ENCODE measurements at regions of chr12 and their contacts with region 1.

Region 1: DNA sequence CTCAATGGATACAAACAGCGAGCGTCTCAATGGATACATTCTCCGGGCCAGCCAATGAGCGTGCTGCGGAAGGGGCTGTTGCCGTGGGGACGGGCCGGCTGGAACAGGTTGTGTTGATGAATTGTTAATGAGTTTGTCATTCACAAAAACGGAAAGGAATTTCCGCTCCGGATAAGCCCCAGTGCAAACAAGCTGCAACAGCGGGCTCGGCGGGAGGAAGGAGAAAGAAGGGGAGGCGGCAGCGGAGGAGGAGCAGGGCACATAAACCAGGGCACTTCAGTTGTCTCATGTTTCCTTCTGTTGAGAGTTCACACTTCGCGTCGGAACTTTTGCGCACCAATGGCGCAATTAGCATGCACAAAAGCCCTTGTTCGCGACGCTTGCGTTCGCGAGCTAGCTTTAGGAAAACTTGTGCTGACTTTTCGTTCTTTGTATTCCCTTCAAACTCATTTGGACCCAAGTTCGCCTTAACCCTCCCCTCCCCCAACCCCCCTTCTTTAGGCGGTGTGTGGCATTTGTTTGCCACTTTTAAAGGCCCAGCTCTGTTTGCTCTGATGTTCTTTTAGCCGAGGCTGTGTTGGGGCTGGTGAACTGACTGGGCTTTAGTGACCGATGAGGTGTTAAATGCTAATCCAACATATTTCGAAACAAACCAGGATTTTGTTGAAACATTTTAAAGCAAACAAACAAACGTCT is at the start of gene DUSP6:
- DNase-seq: peak; percentile 93 to 99
- H3K4me3 ChIP-seq: peak within 1 kb of the TSS; percentile 77
- H3K27ac ChIP-seq: peak within 1 kb of the TSS; percentile 93
- H3K4me1 ChIP-seq: peaks cover 40% of the 10 kb centered on the region
- H3K27me3 ChIP-seq: no peaks in the 10 kb centered on the region
- CTCF ChIP-seq: no peak
- total RNA-seq, gene DUSP6: 14.1 and 18.3 TPM in 2 replicates

Region 2: DNA sequence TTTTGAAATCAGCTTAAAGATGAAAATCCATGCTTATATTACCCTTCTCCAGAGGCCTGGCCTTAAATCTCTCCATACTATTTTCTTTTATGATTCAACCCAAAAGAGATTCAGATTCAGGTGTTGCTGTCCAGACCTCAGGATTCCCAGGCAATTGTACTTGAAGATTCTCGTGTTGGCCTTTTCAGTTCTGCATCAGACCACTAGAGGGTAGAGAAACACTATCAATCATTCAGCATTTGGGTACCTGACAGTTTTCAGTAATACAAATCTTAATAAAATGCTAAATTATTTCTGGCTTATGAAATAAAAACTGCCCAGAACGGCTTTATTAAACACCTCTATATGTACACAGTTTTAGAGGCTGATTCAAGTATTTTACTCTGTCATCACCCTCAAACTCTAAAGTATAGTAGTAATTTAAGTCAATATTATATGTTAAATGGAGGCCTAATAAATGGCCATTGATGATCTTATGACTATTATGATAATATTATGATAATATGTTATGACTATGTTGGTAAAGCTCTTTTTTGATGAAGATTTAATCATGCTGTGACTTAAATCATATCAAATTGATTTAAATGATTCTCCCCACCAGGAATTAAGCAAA is 301.5 kb before region 1 on chr12:
- CTCF ChIA-PET with region 1: no interaction called
- POLR2A ChIA-PET with region 1: no interaction called
- intact Hi-C with region 1: loop called (anchors 1 kb)
- DNase-seq: peak; percentile 18 to 53
- H3K4me3 ChIP-seq: no peak overlapping the region
- H3K27ac ChIP-seq: no peak overlapping the region
- H3K4me1 ChIP-seq: no peaks in the 10 kb centered on the region
- H3K27me3 ChIP-seq: no peaks in the 10 kb centered on the region
- CTCF ChIP-seq: peak; percentile 97

Region 3: DNA sequence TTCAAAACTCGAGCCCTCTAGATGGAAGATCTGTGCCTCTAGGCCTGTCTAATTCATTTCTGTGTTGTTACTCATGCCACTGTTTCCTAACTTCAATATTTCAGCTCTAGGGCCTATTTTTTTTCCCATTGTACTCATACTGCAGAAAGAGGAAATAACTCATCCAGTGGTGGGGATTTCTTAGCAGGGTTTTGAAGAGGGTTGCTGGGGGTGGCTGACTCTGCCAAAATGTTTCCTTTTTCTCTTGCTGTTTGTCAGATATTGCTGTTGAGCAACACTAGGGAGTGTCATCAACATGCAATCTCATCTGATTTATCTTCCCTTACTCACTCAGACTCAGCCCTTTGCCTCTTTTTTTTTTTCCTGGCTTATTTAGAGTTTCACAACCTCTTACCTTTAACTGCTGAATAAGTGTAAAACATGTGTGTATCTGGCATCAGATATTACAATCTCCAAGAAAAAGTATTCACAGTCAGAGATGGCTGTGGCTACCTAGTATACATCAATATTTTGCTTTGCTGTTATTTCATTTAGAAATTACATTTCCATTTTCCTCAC is 189.9 kb before region 1 on chr12:
- CTCF ChIA-PET with region 1: no interaction called
- POLR2A ChIA-PET with region 1: interaction called, 7 read pairs
- intact Hi-C with region 1: loop called (anchors 1 kb)
- DNase-seq: peak; percentile 58 to 97
- H3K4me3 ChIP-seq: no peak overlapping the region
- H3K27ac ChIP-seq: peak overlapping the region; percentile 92
- H3K4me1 ChIP-seq: peaks cover 71% of the 10 kb centered on the region
- H3K27me3 ChIP-seq: no peaks in the 10 kb centered on the region
- CTCF ChIP-seq: no peak

Region 4: DNA sequence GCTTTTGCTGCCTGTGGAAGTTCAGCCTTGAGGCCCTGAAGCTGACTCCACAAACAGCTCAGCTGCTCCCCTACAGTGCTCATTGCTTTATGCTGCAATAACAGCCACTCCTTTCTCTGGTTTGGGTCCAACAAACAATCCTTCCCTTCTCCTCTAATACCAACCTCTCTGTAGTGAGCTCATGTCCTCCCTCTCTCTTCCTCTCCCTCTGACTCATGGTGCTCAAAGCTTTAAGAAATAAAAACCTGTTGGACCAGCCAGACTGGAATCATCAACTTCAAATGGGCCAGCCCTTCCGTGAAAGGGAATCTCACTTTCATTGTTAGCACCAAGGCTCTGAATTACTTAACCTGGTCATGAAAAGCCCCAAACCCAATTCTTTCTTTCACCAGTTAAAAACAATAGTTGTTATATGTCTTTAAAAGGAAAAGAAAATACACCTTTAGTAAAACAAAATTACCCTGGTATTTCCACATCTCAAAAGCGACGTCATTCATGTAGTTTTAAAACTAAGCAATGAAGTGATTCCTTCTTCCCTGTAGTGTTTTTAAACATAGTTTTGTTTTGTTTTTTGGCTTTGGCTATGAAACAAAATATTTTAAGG is 126.7 kb before region 1 on chr12:
- CTCF ChIA-PET with region 1: no interaction called
- POLR2A ChIA-PET with region 1: interaction called, 7 read pairs
- intact Hi-C with region 1: loop called (anchors 1 kb)
- DNase-seq: peak; percentile 69 to 98
- H3K4me3 ChIP-seq: peak overlapping the region; percentile 30; the same call in 1 of the 2 replicates
- H3K27ac ChIP-seq: peak overlapping the region; percentile 93
- H3K4me1 ChIP-seq: peaks cover 55% of the 10 kb centered on the region
- H3K27me3 ChIP-seq: no peaks in the 10 kb centered on the region
- CTCF ChIP-seq: no peak

Region 5: DNA sequence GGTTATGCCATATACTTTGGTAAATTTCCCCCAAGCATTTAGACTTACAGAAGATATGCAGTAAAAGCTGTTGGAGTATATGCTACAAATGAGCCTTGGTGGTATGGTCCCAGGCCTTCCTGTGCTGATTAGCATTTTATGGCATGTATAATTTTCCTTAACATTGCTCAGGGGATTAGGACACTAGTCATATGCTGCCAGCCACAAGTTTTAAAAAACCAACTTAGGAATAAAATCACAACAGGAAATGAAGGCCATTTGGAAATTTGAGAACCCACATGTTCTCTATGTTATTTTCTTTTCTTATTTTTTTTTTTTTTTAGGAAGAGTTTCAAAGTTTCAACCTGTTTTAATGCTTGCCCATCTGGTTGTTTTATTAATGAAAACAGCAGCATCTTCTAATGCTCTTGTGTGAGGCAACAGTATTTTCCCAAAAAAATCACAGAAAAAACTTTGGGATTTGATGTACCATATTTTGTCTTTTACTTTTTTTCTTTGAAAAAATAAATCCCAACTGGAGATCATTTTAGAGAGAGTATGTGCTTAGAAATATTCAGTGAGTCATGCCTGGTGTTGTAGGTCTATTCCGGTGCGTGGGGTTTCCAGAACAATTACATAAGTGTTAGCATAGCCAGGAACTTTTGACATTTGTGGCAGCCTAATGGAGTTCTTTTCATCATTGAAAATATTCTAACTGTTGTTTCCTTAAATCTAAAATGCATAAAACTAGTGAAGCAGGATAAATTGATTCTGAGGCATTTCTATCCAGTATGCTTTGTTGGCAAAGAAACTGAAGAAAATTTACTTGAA is 21.3 kb after region 1 on chr12:
- CTCF ChIA-PET with region 1: no interaction called
- POLR2A ChIA-PET with region 1: interaction called, 22 read pairs
- intact Hi-C with region 1: loop called (anchors 1 kb)
- DNase-seq: peak in 1 of 2 experiments; percentile 32
- H3K4me3 ChIP-seq: no peak overlapping the region
- H3K27ac ChIP-seq: no peak overlapping the region
- H3K4me1 ChIP-seq: peaks cover 25% of the 10 kb centered on the region
- H3K27me3 ChIP-seq: no peaks in the 10 kb centered on the region
- CTCF ChIP-seq: no peak

Region 6: DNA sequence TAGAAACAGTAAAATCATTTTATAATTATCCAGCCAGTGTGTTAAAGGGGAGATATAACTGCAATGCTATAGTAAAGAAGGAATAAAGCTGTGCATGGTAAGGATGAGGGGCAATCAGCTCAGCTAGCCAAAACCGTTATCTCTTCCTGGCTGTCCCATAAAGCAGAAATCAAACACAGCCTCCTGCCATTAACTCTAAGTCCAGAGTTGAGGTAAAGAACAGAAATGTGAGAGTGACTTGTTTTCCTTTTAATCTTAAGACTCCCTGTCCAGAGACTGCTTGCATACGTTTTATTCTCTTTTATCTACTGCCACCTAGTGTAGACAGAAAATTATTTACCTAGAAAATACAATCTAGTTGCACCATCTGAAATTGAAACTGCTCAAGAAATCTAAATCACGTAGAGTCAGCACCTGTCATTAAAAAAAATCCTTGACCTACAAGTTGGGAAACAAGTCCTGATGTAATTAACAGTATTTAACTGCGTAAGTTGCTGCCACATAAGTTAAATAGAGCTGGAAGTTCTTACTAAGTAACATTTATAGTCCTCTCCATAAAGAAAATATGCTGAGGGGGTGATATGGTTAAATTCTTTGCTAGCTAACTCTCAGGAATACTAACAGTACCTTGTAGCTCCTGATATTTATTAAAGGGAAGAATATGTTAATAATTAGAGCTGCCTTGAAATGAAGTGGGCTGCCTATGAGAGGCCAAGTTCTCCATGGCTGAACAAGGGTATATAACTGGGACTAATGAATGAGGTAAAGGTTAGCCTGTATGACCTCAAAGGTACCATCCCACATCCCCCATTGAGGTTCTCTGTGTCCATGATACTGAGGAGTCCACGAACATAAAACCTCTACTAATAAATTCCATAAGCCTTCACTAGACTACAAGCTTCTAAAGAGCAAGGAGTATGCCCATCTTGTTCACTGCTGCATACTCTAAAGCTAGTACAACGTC is 109.3 kb after region 1 on chr12:
- CTCF ChIA-PET with region 1: interaction called, 5 read pairs
- POLR2A ChIA-PET with region 1: no interaction called
- intact Hi-C with region 1: loop called (anchors 1 kb)
- DNase-seq: peak in 1 of 2 experiments; percentile 66
- H3K4me3 ChIP-seq: peak overlapping the region; percentile 28; the same call in 1 of the 2 replicates
- H3K27ac ChIP-seq: peak overlapping the region; percentile 17; the same call in 1 of the 2 replicates
- H3K4me1 ChIP-seq: peaks cover 4% of the 10 kb centered on the region
- H3K27me3 ChIP-seq: no peaks in the 10 kb centered on the region
- CTCF ChIP-seq: peak; percentile 77